Naive thymus-derived CD4-positive, alpha-beta T cell (primary cell): ENCODE measurements at regions of chrX and their contacts with region 1.

Region 1: DNA sequence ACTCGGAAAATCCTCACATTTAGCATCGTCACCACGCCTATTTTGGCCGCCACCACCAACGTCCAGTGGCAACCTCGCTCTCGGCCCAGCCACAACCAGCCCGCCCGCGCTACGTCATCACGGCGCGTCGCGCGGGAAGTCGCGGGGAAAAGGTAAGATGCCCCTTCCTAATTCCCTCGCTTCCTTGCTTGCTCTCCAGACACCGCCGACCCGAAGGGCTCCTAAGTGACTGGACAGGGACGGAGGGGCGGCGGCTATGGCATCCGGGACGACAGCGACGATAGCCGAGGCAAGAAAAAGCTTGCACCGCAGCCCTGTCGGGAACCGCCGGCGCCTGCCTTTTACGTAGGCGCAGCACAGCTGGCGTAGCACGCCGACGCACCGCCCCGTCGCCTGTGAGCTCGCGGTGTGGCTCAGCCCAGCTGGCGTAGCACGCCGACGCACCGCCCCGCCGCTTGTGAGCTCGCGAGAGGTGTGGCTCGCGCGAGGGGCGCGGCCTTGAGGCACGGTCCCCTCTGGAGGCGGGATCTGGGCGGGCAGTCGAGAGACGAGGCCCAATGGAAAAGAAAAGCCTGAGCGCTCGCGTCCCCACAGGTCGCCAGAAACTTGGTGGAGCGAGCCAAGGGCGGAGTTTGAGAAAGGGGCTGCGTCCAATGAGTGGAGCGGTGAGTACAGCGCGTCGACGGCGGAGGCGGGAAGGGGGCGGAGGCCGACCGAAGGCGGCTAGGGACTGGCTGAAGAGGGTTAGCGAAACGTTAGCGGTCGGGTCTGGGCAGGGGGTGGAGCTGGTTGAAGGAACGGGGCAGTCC is at the start of gene HDAC6:
- DNase-seq: peak; percentile 76 to 98 (median 95)
- ATAC-seq: peak; percentile 91
- H3K4me3 ChIP-seq: peak within 1 kb of the TSS; percentile 84
- H3K4me3 Mint-ChIP-seq: peak within 1 kb of the TSS; percentile 91 to 98 (median 96)
- H3K27ac ChIP-seq: peak within 1 kb of the TSS; percentile 97
- H3K27ac Mint-ChIP-seq: peak within 1 kb of the TSS; percentile 96 to 99 (median 98)
- H3K4me1 ChIP-seq: peaks cover 6 to 12% of the 10 kb centered on the region in 2 donors
- H3K4me1 Mint-ChIP-seq: peaks cover 10 to 27% (median 16%) of the 10 kb centered on the region in 7 donors
- H3K27me3 ChIP-seq: no peaks in the 10 kb centered on the region
- H3K27me3 Mint-ChIP-seq: no peaks in the 10 kb centered on the region
- total RNA-seq, gene HDAC6: 84.3 to 135 (median 96.1) TPM

Region 2: DNA sequence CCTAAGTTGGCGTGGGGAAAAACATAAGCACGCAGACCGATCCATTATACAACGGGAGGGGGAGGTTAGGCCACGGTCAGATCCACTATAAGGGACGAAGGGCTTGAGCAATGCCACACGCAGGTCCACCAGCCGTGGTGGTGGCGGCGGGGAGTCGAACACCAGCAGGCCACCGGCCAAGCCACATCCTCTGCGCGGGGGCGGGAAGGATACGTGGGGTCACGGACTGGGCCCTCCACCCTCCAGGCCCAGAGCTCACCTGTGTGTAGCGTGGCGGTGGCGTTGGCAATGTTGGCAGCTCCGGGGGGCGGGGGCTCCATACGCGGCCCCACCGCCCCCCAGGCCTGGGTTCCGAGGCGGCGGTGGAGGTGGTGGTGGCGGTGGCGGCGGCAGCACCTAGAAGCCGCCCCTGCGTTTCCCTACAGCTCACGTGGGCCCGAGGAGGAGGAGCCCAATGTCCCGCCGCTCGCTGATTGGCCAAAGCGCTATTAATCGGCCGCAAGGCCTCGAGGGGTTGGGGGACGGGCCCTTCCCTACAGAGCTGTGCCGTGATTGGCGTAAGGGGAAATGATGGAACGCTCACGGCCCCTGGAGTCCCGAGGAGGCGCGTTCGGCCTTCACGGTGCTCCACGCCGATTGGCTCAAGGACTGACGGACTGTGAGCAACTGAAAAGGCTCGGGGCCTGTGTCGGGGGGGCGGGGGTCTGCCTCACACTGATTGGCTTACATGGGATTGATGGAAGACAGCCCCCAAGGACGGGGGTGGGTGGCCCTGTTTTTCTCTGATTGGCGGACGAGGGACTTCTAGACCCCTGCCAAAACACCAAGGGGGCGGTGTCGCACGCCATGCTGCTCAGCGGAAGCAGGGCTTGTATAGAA is 1151.1 kb before region 1 on chrX and contains the start of gene ELK1:
- CTCF ChIA-PET with region 1: no interaction called
- POLR2A ChIA-PET with region 1: no interaction called
- intact Hi-C with region 1: no loop called
- DNase-seq: peak; percentile 67 to 92 (median 88)
- ATAC-seq: peak; percentile 95
- H3K4me3 ChIP-seq: peak within 1 kb of the TSS; percentile 70
- H3K4me3 Mint-ChIP-seq: peak within 1 kb of the TSS; percentile 87 to 96 (median 90)
- H3K27ac ChIP-seq: peak within 1 kb of the TSS; percentile 85
- H3K27ac Mint-ChIP-seq: peak within 1 kb of the TSS; percentile 89 to 97 (median 95)
- H3K4me1 ChIP-seq: peaks cover 12 to 16% of the 10 kb centered on the region in 2 donors
- H3K4me1 Mint-ChIP-seq: peaks cover 35 to 52% (median 48%) of the 10 kb centered on the region in 7 donors
- H3K27me3 ChIP-seq: no peaks in the 10 kb centered on the region
- H3K27me3 Mint-ChIP-seq: no peaks in the 10 kb centered on the region
- total RNA-seq, gene ELK1: 29.3 to 62.4 (median 38.1) TPM

Region 3: DNA sequence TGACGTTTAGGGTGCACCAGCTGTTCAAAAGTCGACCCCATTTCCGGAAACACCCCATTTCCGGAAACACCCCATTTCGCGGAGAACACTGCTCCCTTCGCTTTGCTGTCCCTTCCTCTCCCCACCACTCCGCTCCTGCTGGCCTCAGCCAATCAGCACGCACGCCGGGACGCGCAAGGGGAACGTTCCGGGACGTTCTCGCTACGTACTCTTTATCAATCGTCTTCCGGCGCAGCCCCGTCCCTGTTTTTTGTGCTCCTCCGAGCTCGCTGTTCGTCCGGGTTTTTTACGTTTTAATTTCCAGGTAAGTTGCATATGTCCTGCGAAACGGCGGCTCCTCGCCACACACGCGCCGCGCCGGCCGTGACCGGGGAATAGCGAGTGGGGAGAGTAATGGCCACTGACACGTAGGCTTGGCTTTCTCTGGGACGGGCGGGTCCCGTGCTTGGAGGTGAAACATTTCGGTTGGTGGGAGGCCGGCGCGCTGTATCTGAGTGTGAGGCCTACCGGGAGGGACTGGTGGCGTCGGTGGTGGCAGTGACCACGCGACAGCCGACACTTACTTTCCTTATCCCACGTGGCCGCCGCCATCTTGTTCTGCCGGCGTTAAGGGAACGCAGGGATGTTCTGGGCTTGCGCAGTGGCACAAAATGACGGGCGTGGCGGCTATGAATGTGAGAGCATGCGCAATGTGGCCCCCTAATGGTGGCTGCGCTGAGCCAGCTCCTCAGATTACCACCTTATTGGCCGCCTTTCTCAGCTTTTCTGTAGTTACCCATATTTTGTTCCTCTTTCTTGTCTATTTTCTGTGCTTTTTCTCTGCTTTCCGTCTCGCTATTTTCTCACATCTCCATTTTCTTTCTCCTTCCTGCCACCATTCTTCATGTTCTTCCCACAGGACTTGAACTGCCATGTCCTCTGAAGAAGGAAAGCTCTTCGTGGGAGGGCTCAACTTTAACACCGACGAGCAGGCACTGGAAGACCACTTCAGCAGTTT is 226.9 kb before region 1 on chrX and contains the start of gene RBM3:
- CTCF ChIA-PET with region 1: no interaction called
- POLR2A ChIA-PET with region 1: interaction called, 4 read pairs
- intact Hi-C with region 1: loop called (anchors 1 kb)
- DNase-seq: peak; percentile 64 to 96 (median 92)
- ATAC-seq: peak; percentile 94
- H3K4me3 ChIP-seq: peak within 1 kb of the TSS; percentile 68
- H3K4me3 Mint-ChIP-seq: peak within 1 kb of the TSS; percentile 88 to 100 (median 97)
- H3K27ac ChIP-seq: peak within 1 kb of the TSS; percentile 99
- H3K27ac Mint-ChIP-seq: peak within 1 kb of the TSS; percentile 95 to 100 (median 99)
- H3K4me1 ChIP-seq: peaks cover 16 to 20% of the 10 kb centered on the region in 2 donors
- H3K4me1 Mint-ChIP-seq: peaks cover 6 to 32% (median 25%) of the 10 kb centered on the region in 7 donors
- H3K27me3 ChIP-seq: no peaks in the 10 kb centered on the region
- H3K27me3 Mint-ChIP-seq: no peaks in the 10 kb centered on the region
- total RNA-seq, gene RBM3: 176 to 374 (median 329) TPM

Region 4: GRCh38 chrX:48676106-48676892 is 125.2 kb before region 1 on chrX:
- CTCF ChIA-PET with region 1: no interaction called
- POLR2A ChIA-PET with region 1: interaction called, 12 read pairs
- intact Hi-C with region 1: loop called (anchors 1 to 5 kb)
- DNase-seq: peak; percentile 74 to 89 (median 88)
- ATAC-seq: peak; percentile 98
- H3K4me3 ChIP-seq: peak overlapping the region; percentile 77
- H3K4me3 Mint-ChIP-seq: peak overlapping the region; percentile 88 to 94 (median 92)
- H3K27ac ChIP-seq: peak overlapping the region; percentile 90
- H3K27ac Mint-ChIP-seq: peak overlapping the region; percentile 82 to 95 (median 90)
- H3K4me1 ChIP-seq: no peaks in the 10 kb centered on the region
- H3K4me1 Mint-ChIP-seq: peaks cover 6 to 26% (median 22%) of the 10 kb centered on the region in 7 donors
- H3K27me3 ChIP-seq: no peaks in the 10 kb centered on the region
- H3K27me3 Mint-ChIP-seq: no peaks in the 10 kb centered on the region

Region 5: DNA sequence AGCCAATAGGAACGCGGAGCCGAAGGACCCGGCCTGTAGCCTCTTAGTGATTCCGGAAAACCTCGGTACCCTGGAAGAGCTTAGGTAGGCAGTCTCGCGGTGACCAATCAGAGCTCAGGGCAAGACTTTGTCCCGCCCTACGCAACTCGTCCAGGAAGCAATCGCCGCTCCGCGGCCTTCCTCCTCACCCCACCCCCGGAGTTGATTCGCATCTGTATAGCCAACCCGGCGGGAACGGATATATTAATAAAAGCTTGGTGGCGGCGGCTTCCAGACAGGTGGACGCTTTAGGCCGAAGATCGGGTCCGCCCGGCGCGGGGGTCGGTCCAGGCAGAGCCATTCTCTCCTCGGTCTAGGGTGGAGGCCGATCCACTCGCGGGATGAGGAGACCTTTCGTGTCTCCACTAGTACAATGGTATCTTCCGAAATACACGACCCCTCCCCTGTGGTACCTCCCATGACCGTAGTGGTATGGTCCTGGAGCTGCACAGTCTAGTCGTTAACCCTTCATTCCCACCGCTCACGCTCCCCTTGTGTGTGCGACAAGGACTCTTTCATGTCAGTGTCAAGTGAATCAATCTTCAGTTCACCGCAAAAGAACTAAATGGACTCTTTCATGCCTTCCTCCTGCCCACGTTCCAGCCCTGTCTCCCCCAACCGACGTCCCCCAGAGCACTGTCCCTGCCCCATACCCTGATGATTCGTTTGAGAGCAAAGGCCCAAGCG is 64.1 kb before region 1 on chrX:
- CTCF ChIA-PET with region 1: no interaction called
- POLR2A ChIA-PET with region 1: interaction called, 21 read pairs
- intact Hi-C with region 1: loop called (anchors 1 kb)
- DNase-seq: peak; percentile 55 to 94 (median 89)
- ATAC-seq: peak; percentile 98
- H3K4me3 ChIP-seq: peak overlapping the region; percentile 81
- H3K4me3 Mint-ChIP-seq: peak overlapping the region; percentile 79 to 98 (median 94)
- H3K27ac ChIP-seq: peak overlapping the region; percentile 91
- H3K27ac Mint-ChIP-seq: peak overlapping the region; percentile 90 to 99 (median 96)
- H3K4me1 ChIP-seq: peaks cover 12 to 14% of the 10 kb centered on the region in 2 donors
- H3K4me1 Mint-ChIP-seq: peaks cover 8 to 31% (median 24%) of the 10 kb centered on the region in 7 donors
- H3K27me3 ChIP-seq: no peaks in the 10 kb centered on the region
- H3K27me3 Mint-ChIP-seq: no peaks in the 10 kb centered on the region

Region 6: DNA sequence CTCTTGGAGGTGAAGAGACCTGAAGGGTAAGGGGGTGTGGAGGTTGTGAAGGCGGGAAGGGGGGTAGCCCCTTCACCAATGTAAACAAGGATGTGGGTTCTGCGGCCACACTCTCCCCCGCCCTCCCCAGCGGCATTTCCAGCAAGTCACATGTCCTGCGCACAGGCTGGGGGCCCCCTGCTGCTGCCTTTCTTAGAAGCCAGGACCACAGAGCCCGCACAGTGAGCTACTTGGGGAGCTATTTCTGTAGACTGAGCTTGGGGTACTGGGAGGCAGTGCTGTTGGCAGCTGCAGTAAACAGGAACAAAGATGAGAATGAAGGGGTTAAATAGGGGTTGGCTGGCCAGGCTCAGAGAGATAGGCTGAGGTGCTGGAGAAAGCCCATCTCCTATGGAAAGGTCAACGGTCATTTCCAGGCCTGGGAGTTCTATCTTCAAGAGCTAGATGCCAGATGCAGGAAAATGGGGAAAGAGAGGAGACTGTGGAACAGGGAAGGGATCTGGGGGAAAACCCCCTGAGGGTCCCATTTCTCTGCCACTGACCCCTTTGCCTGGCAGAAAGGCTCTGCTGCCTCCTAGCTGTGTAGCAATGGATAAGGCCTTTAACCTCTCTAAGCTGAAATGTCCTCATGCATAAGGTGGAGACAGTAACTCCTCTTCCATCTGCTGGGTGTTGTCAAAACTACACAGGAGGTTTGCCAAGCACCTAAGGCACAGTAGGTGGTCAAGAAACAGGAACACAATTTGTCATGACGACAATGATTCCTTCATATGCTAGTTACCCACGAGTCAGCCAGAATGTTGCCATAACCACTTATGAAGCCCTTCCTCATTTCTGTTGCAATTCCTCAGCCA is 135.8 kb after region 1 on chrX:
- CTCF ChIA-PET with region 1: no interaction called
- POLR2A ChIA-PET with region 1: interaction called, 11 read pairs
- intact Hi-C with region 1: loop called (anchors 1 to 5 kb)
- DNase-seq: peak; percentile 59 to 96 (median 92)
- ATAC-seq: peak; percentile 75
- H3K4me3 ChIP-seq: peak overlapping the region; percentile 70
- H3K4me3 Mint-ChIP-seq: peak overlapping the region; percentile 78 to 96 (median 88)
- H3K27ac ChIP-seq: peak overlapping the region; percentile 97
- H3K27ac Mint-ChIP-seq: peak overlapping the region; percentile 96 to 99 (median 99)
- H3K4me1 ChIP-seq: peaks cover 69 to 80% of the 10 kb centered on the region in 2 donors
- H3K4me1 Mint-ChIP-seq: peaks cover 36 to 91% (median 80%) of the 10 kb centered on the region in 7 donors
- H3K27me3 ChIP-seq: no peaks in the 10 kb centered on the region
- H3K27me3 Mint-ChIP-seq: peaks cover 0 to 3% (median 0%) of the 10 kb centered on the region in 5 donors

Region 7: GRCh38 chrX:49922291-49923241 is 1121.1 kb after region 1 on chrX and contains the start of gene CLCN5:
- CTCF ChIA-PET with region 1: no interaction called
- POLR2A ChIA-PET with region 1: no interaction called
- intact Hi-C with region 1: loop called in 1 of 2 experiments (anchors 5 kb)
- DNase-seq: peak; percentile 85 to 96 (median 94)
- ATAC-seq: peak; percentile 97
- H3K4me3 ChIP-seq: peak within 1 kb of the TSS; percentile 74
- H3K4me3 Mint-ChIP-seq: peak within 1 kb of the TSS; percentile 76 to 86 (median 83)
- H3K27ac ChIP-seq: peak within 1 kb of the TSS; percentile 61
- H3K27ac Mint-ChIP-seq: peak within 1 kb of the TSS; percentile 43 to 85 (median 57)
- H3K4me1 ChIP-seq: peaks cover 0 to 5% of the 10 kb centered on the region in 2 donors
- H3K4me1 Mint-ChIP-seq: peaks cover 0 to 16% (median 8%) of the 10 kb centered on the region in 7 donors
- H3K27me3 ChIP-seq: no peaks in the 10 kb centered on the region
- H3K27me3 Mint-ChIP-seq: no peaks in the 10 kb centered on the region
- total RNA-seq, gene CLCN5: 2.8 to 3.9 (median 3.8) TPM